Activated CD4-positive, alpha-beta T cell treated with anti-CD3 and anti-CD28 coated beads for 36 hours (primary cell): ENCODE measurements at regions of chr10 and their contacts with region 1.

Region 1: GRCh38 chr10:60572511-60573194 is 183.0 kb upstream of the ANK3 start:
- DNase-seq: peak; percentile 71
- ATAC-seq: peak; percentile 62
- H3K4me3 Mint-ChIP-seq: peak overlapping the region; percentile 78
- H3K27ac Mint-ChIP-seq: peak overlapping the region; percentile 93
- H3K4me1 Mint-ChIP-seq: peaks cover 54% of the 10 kb centered on the region
- H3K27me3 Mint-ChIP-seq: no peaks in the 10 kb centered on the region

Region 2: GRCh38 chr10:60237977-60238758 is 334.5 kb before region 1 on chr10:
- CTCF ChIA-PET with region 1: no interaction called
- POLR2A ChIA-PET with region 1: no interaction called
- intact Hi-C with region 1: loop called in 1 of 2 experiments (anchors 1 kb)
- DNase-seq: peak; percentile 54
- ATAC-seq: peak; percentile 96
- H3K4me3 Mint-ChIP-seq: peak overlapping the region; percentile 48
- H3K27ac Mint-ChIP-seq: peak overlapping the region; percentile 70
- H3K4me1 Mint-ChIP-seq: peaks cover 33% of the 10 kb centered on the region
- H3K27me3 Mint-ChIP-seq: no peaks in the 10 kb centered on the region

Region 3: DNA sequence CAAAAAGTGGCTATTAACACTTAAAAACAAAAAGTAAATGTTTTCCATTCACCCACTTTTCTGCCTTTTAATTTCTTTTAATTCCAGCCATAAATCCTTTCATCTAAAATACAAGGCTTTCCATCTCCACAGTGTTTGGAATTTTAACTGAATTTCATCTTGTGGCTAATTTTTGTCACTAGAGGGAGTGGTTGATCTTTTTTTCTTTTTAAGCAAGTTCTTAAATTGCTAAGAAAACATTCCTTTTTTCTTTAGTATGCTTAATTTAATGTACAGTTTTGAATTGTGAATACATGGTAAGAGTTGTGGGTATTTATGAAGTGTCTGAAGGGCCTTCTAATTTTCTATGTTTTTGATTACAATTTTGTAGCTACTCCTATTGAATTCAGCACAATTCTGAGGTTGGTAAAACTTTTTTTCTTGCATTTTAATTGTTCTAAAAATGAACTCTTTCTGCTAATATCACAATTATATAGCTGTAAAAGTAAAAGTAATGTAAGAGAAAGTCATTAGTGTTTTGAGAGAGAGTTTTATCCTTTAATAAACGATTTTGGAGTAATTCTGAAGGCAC is 128.1 kb before region 1 on chr10:
- CTCF ChIA-PET with region 1: no interaction called
- POLR2A ChIA-PET with region 1: no interaction called
- intact Hi-C with region 1: no loop called
- DNase-seq: no peak
- ATAC-seq: no peak
- H3K4me3 Mint-ChIP-seq: no peak overlapping the region
- H3K27ac Mint-ChIP-seq: no peak overlapping the region
- H3K4me1 Mint-ChIP-seq: peaks cover 29% of the 10 kb centered on the region
- H3K27me3 Mint-ChIP-seq: no peaks in the 10 kb centered on the region

Region 4: GRCh38 chr10:60594476-60595051 is 21.9 kb after region 1 on chr10:
- CTCF ChIA-PET with region 1: interaction called, 6 read pairs
- POLR2A ChIA-PET with region 1: no interaction called
- intact Hi-C with region 1: loop called (anchors 2 kb)
- DNase-seq: peak; percentile 27
- ATAC-seq: peak; percentile 94
- H3K4me3 Mint-ChIP-seq: no peak overlapping the region
- H3K27ac Mint-ChIP-seq: no peak overlapping the region
- H3K4me1 Mint-ChIP-seq: peaks cover 23% of the 10 kb centered on the region
- H3K27me3 Mint-ChIP-seq: no peaks in the 10 kb centered on the region

Region 5: GRCh38 chr10:60728056-60728455 is 155.4 kb after region 1 on chr10:
- CTCF ChIA-PET with region 1: no interaction called
- POLR2A ChIA-PET with region 1: interaction called, 3 read pairs
- intact Hi-C with region 1: loop called in 1 of 2 experiments (anchors 1 kb)
- DNase-seq: no peak
- ATAC-seq: peak; percentile 52
- H3K4me3 Mint-ChIP-seq: peak overlapping the region; percentile 76
- H3K27ac Mint-ChIP-seq: peak overlapping the region; percentile 97
- H3K4me1 Mint-ChIP-seq: peaks cover 76% of the 10 kb centered on the region
- H3K27me3 Mint-ChIP-seq: no peaks in the 10 kb centered on the region

Region 6: DNA sequence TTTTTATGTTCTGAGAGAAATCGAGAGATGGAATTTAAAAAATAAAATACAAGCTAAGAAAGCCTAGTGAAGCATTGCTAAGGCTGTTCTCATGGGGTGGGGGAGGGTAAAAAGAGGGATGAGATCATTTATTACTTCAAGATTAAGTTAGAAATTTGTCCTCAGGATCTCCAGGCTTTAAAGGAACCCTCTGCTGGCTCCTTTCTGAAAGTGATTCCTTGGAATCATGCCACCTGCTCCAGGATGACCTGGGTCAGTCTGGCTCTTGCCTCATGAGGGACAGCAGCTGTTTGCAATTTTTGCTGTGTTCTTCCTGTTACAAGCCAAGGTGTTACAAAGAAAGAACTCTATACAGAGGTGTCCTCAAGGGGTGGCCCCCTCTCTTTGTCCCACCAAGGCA is 275.5 kb after region 1 on chr10:
- CTCF ChIA-PET with region 1: no interaction called
- POLR2A ChIA-PET with region 1: no interaction called
- intact Hi-C with region 1: no loop called
- DNase-seq: no peak
- ATAC-seq: no peak
- H3K4me3 Mint-ChIP-seq: no peak overlapping the region
- H3K27ac Mint-ChIP-seq: no peak overlapping the region
- H3K4me1 Mint-ChIP-seq: no peaks in the 10 kb centered on the region
- H3K27me3 Mint-ChIP-seq: no peaks in the 10 kb centered on the region

Region 7: GRCh38 chr10:61410353-61410752 is 837.7 kb after region 1 on chr10:
- CTCF ChIA-PET with region 1: no interaction called
- POLR2A ChIA-PET with region 1: no interaction called
- intact Hi-C with region 1: no loop called
- DNase-seq: no peak
- ATAC-seq: no peak
- H3K4me3 Mint-ChIP-seq: no peak overlapping the region
- H3K27ac Mint-ChIP-seq: no peak overlapping the region
- H3K4me1 Mint-ChIP-seq: no peaks in the 10 kb centered on the region
- H3K27me3 Mint-ChIP-seq: peaks cover 6% of the 10 kb centered on the region